ENCODE measurements at regions of chr1 and their contacts with region 1.

Region 1: GRCh38 chr1:179365320-179366092 is at the start of gene AXDND1:
- DNase-seq: peak; percentile 97
- H3K4me3 ChIP-seq: peak within 1 kb of the TSS; percentile 22 to 91 (median 74)
- H3K27ac ChIP-seq: peak within 1 kb of the TSS; percentile 76 to 98 (median 95)
- H3K4me1 ChIP-seq: peaks cover 3 to 20% (median 12%) of the 10 kb centered on the region in 6 donors
- H3K27me3 ChIP-seq: no peaks in the 10 kb centered on the region
- CTCF ChIP-seq: peak in 5 of 11 experiments; percentile 11 to 44 (median 15)
- POLR2A ChIP-seq: peak in 1 of 3 donors; percentile 10
- total RNA-seq, gene AXDND1: 0.66 TPM in 1 of 7 donors, not detected in the others

Region 2: GRCh38 chr1:178532392-178532791 is 833.1 kb before region 1 on chr1:
- intact Hi-C with region 1: loop called (anchors 10 kb)
- DNase-seq: peak; percentile 93
- H3K4me3 ChIP-seq: peak overlapping the region in 1 of 8 donors; percentile 13
- H3K27ac ChIP-seq: no peak overlapping the region
- H3K4me1 ChIP-seq: peaks cover 0 to 10% (median 8%) of the 10 kb centered on the region in 6 donors
- H3K27me3 ChIP-seq: peaks cover 0 to 5% (median 0%) of the 10 kb centered on the region in 7 donors
- CTCF ChIP-seq: peak; percentile 71 to 92 (median 85)
- POLR2A ChIP-seq: no peak

Region 3: DNA sequence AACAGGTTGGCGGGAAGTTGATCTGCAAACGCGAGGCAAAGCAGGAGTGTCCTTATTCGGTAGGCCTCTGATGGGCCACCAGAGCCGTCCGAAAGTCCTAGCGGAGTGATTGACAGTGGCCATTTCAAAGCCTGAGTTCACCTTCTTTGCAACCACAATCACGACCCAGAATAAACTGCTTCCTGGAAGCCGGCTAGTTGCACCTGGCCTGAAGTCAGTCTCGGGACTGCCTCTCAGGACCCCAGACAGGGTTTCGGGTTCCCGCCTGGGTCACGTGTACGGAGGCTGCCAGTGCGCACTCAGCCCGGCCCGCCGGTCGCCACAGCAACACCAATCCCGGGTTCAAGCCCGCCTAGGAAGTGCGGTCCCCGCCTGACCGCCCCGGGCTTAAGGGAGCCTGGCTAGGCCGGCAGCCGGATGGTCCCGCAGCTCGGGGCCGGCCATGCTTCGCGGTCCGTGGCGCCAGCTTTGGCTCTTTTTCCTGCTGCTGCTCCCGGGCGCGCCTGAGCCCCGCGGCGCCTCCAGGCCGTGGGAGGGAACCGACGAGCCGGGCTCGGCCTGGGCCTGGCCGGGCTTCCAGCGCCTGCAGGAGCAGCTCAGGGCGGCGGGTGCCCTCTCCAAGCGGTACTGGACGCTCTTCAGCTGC is 283.7 kb before region 1 on chr1 and contains the start of gene TOR3A:
- intact Hi-C with region 1: loop called (anchors 2 kb)
- DNase-seq: peak; percentile 98
- H3K4me3 ChIP-seq: peak within 1 kb of the TSS; percentile 83 to 97 (median 88)
- H3K27ac ChIP-seq: peak within 1 kb of the TSS; percentile 82 to 94 (median 91)
- H3K4me1 ChIP-seq: peaks cover 14 to 61% (median 32%) of the 10 kb centered on the region in 6 donors
- H3K27me3 ChIP-seq: no peaks in the 10 kb centered on the region
- CTCF ChIP-seq: no peak
- POLR2A ChIP-seq: peak in 2 of 3 donors; percentile 51 to 73
- total RNA-seq, gene TOR3A: 38.5 to 51.7 (median 42.1) TPM

Region 4: GRCh38 chr1:179121159-179121938 is 244.2 kb before region 1 on chr1:
- intact Hi-C with region 1: loop called (anchors 10 kb)
- DNase-seq: no peak
- H3K4me3 ChIP-seq: no peak overlapping the region
- H3K27ac ChIP-seq: no peak overlapping the region
- H3K4me1 ChIP-seq: peaks cover 0 to 10% (median 0%) of the 10 kb centered on the region in 6 donors
- H3K27me3 ChIP-seq: no peaks in the 10 kb centered on the region
- CTCF ChIP-seq: peak in 10 of 11 experiments; percentile 10 to 66 (median 53)
- POLR2A ChIP-seq: no peak

Region 5: GRCh38 chr1:179293340-179294327 is 71.9 kb before region 1 on chr1 and contains the start of gene SOAT1:
- intact Hi-C with region 1: loop called (anchors 5 kb)
- DNase-seq: peak; percentile 98
- H3K4me3 ChIP-seq: peak within 1 kb of the TSS; percentile 55 to 88 (median 80)
- H3K27ac ChIP-seq: peak within 1 kb of the TSS; percentile 88 to 97 (median 95)
- H3K4me1 ChIP-seq: peaks cover 17 to 56% (median 44%) of the 10 kb centered on the region in 6 donors
- H3K27me3 ChIP-seq: no peaks in the 10 kb centered on the region
- CTCF ChIP-seq: peak in 7 of 11 experiments; percentile 11 to 47 (median 33)
- POLR2A ChIP-seq: peak in 1 of 3 donors; percentile 75
- total RNA-seq, gene SOAT1: 24.7 to 47.6 (median 33.7) TPM